ENCODE measurements at regions of chrX and their contacts with region 1.

Region 1: GRCh38 chrX:32530802-32531403 is 680.4 kb downstream of the DMD start:
- DNase-seq: peak; percentile 20
- H3K4me3 ChIP-seq: peak overlapping the region in 1 of 3 experiments; percentile 25
- H3K27ac ChIP-seq: no peak overlapping the region
- H3K4me1 ChIP-seq: no peaks in the 10 kb centered on the region
- H3K27me3 ChIP-seq: peaks cover 2% of the 10 kb centered on the region
- CTCF ChIP-seq: peak; percentile 70 to 80

Region 2: GRCh38 chrX:32673193-32673592 is 142.3 kb after region 1 on chrX:
- CTCF ChIA-PET with region 1: no interaction called
- dilution Hi-C with region 1: no loop called
- in situ Hi-C with region 1: no loop called
- intact Hi-C with region 1: loop called (anchors 2 kb)
- DNase-seq: no peak
- H3K4me3 ChIP-seq: no peak overlapping the region
- H3K27ac ChIP-seq: no peak overlapping the region
- H3K4me1 ChIP-seq: peaks cover 4% of the 10 kb centered on the region
- H3K27me3 ChIP-seq: no peaks in the 10 kb centered on the region
- CTCF ChIP-seq: peak; percentile 0 to 35

Region 3: GRCh38 chrX:34300871-34301270 is 1770.0 kb after region 1 on chrX:
- CTCF ChIA-PET with region 1: no interaction called
- dilution Hi-C with region 1: no loop called
- in situ Hi-C with region 1: no loop called
- intact Hi-C with region 1: loop called (anchors 5 kb)
- DNase-seq: peak; percentile 12
- H3K4me3 ChIP-seq: no peak overlapping the region
- H3K27ac ChIP-seq: no peak overlapping the region
- H3K4me1 ChIP-seq: no peaks in the 10 kb centered on the region
- H3K27me3 ChIP-seq: no peaks in the 10 kb centered on the region
- CTCF ChIP-seq: peak; percentile 69 to 82